ENCODE measurements at regions of chr3 and their contacts with region 1.

Region 1: DNA sequence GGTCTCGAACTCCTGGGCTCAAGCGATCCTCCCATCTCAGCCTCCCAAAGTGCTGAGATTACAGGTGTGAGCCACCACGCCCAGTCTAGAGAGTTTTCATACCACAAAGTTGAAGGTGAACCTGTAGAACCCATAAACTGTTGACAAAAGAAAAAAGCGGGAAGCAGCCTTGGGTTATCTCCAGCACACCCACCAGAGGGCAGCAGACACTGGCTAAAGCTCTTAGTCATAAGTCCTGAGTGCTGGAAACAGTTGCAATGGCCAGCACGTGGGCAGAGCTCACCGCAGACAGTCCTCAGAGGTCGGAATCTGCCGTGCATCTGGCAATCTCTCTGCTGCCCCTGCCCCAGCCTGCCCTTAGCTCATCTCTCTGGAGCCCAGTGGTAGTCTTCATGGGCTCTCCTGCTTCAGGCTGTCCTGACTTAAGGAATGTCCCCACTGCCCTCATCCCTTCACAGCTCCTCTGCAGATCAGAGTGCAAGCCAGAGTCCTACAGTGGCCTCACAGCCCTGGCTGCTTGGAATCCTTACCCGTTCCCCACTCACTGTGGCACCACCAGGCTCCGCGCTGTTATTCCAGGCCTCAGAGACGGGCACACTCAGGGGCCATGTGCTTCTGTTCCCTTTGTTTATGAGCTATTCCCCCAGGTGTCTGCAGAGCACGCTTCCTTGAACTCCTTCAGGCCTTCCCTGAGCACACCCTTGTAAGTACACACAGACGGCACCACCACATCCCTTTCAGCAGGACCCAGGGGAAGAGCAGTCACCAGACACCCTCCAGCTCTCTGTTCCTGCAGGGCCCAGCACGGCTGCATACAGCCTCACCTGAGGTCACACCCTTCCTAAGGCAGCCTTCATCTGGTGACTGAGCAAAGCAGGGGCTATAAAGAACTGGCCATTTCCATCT is 8.8 kb upstream of the ELP6 start:
- DNase-seq: peak; percentile 88
- CTCF ChIP-seq: peak; percentile 91

Region 2: GRCh38 chr3:47533481-47533880 is 11.1 kb after region 1 on chr3:
- CTCF ChIA-PET with region 1: interaction called, 43 read pairs
- POLR2A ChIA-PET with region 1: no interaction called
- DNase-seq: no peak
- CTCF ChIP-seq: no peak

Region 3: GRCh38 chr3:47571391-47572175 is 49.2 kb after region 1 on chr3:
- CTCF ChIA-PET with region 1: interaction called, 10 read pairs
- POLR2A ChIA-PET with region 1: no interaction called
- DNase-seq: no peak
- CTCF ChIP-seq: no peak

Region 4: GRCh38 chr3:47791193-47791855 is 269.0 kb after region 1 on chr3:
- CTCF ChIA-PET with region 1: interaction called, 56 read pairs
- POLR2A ChIA-PET with region 1: interaction called, 4 read pairs
- DNase-seq: no peak
- CTCF ChIP-seq: no peak

Region 5: DNA sequence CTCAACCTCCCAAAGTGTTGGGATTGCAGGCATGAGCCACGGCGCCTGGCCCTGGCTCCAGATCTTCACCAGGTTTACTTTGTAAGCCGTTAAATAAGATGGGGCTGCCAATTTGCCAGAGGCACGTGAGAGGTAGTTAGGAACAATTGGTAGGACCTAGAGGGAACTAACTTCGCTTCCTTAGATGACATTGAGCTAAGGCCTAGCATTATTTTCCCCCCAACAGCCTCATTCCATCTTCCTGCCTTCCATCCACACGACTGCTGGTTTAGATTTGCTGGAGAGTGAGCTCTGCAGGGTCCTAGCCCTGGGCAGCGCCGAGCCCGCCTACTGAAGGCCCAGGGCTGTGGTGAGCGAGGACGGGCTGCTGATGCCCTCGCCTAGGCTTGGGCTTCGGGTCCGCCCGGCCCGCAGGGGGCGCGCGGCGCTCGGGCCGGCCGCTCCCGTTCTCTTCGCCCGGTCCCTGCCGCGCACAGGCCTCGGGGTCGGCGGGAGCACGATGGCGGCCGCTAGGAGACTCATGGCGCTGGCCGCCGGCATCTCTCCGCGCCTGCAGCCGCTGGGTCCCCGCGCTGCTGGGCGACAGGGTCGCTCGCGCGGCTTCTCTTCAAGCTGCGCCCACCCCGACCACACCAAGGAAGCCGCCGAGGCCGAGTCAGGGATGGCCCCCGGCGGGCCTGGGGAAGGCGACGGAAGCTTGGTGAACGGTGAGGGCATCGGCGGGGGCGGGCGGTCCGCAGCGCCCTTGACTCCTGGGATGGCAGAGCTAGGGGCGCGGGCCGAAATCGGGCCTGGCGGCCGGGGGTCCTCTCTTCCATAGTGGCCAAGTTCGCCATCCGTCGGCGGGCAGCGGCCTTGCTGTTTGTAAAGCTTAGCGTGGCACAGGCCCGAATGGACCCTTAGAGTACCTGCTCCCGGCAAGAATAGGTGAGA is 302.5 kb after region 1 on chr3:
- CTCF ChIA-PET with region 1: interaction called, 32 read pairs
- POLR2A ChIA-PET with region 1: no interaction called
- DNase-seq: peak; percentile 96
- CTCF ChIP-seq: peak; percentile 96

Region 6: DNA sequence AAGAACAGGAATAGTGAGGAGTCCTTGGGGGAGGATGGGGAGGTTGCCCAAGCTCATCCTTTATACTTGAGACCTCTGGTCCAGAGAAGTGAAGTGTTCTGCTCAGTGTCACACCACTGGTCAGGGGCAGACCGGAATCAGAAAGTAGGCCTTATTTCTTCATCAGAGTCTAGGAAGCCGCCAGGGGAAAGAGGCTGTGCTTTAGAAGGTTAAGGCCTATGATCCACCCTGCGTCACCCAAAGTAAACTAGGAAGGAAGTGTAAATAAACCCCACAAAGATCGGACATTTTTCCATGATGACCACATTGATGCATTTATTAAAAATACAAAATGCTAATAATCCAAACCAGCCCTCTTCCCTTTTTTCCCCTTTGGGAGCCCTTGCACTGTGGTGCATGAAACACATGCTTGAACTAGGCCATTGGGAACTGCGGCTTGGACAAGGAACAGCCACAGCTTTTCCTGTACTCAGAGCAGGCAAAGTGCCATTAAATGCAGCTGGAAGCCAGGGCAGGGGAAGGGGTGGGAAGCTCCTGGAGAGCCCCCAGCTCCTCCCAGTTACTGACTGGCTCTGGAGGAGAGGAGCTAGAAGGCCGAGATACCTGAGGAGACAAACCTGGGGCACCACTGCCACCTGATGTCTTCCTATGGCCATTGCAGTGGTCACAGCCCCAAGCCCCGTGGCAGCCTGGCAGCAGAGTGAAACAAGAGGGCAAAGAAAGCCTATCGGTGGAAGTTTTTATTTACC is 628.9 kb after region 1 on chr3:
- CTCF ChIA-PET with region 1: interaction called, 43 read pairs
- POLR2A ChIA-PET with region 1: no interaction called
- DNase-seq: peak; percentile 85
- CTCF ChIP-seq: peak; percentile 88

Measured in GM10248 (cell line).